ENCODE measurements at regions of chr17 and their contacts with region 1.

Region 1: GRCh38 chr17:80426681-80427326 is 11.8 kb downstream of the ENDOV start:
- DNase-seq: peak; percentile 90

Region 2: GRCh38 chr17:80147035-80147836 is 279.6 kb before region 1 on chr17 and contains the start of gene EIF4A3:
- intact Hi-C with region 1: no loop called
- DNase-seq: peak; percentile 100
- total RNA-seq, gene EIF4A3: 48.8 to 50.5 TPM

Region 3: GRCh38 chr17:80364216-80364618 is 62.6 kb before region 1 on chr17:
- intact Hi-C with region 1: no loop called
- DNase-seq: peak; percentile 79

Region 4: GRCh38 chr17:80449930-80450576 is 23.2 kb after region 1 on chr17:
- intact Hi-C with region 1: loop called in 1 of 2 experiments (anchors 1 kb)
- DNase-seq: no peak

Region 5: DNA sequence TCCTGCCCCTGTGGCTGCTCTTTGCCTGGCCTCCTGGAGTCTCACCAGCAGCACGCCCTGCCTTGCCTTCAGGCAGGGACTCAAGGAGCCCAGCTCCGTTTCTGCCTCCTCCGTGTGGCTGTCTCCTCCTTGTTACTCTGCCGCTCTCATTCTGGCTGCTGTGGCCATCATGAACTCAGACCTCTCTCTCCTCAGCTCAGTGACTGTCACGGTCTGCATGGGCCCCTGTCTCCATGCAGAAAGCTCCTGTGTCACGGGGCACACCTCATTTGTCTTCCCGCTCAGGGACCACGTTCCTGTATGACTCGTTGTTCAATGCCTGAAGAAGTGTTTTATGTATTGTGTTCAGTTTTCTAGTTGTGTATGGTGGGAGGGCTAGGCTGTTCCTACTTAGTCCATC is 143.1 kb after region 1 on chr17:
- intact Hi-C with region 1: loop called in 1 of 2 experiments (anchors 5 kb)
- DNase-seq: no peak

Region 6: DNA sequence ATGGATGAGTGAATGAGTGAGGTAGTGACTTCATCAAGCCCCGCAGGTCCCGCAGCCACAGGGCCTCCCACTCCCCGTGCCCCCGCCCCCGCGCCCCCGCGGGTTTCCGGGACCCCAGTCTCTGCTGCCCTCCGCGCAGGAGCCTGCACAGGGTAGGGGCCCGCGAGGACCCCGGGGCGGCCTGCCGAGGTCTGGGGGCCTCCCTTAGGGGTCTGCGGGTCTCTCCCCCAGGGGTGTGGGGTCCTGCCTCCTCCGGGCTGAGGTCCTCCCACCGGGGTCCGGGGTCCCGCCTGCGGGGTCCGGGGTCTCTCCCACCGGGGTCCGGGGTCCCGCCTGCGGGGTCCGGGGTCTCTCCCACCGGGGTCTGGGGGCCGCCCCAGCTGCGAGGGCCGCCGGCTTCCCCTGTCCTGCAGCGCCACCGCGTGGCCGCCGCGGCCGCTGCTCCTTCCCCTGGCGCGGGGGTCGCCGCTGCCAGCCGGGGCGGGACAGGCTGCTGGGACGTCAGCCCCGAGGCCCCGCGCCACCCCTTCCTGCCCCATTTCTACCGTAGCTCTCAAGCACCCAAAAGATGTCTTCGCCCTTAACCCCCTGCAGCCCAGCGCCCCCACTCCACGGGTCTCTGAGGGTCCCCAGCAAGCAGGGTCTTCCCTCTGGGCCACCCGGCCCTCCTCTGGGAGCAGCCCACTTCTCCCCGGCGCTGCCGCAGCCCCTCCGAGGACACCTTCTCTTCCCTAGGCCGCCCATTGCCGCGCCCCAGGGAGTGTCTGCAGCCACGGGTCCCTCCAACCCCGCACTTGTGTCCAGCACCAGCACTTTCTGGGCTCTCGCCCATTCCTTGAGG is 554.5 kb after region 1 on chr17:
- intact Hi-C with region 1: loop called (anchors 1 to 5 kb)
- DNase-seq: no peak

Region 7: GRCh38 chr17:81101614-81102306 is 675.0 kb after region 1 on chr17:
- intact Hi-C with region 1: loop called (anchors 5 to 10 kb)
- DNase-seq: peak; percentile 94

Measured in posterior vena cava (tissue), 2 donors.